ENCODE measurements at regions of chr15 and their contacts with region 1.

Region 1: DNA sequence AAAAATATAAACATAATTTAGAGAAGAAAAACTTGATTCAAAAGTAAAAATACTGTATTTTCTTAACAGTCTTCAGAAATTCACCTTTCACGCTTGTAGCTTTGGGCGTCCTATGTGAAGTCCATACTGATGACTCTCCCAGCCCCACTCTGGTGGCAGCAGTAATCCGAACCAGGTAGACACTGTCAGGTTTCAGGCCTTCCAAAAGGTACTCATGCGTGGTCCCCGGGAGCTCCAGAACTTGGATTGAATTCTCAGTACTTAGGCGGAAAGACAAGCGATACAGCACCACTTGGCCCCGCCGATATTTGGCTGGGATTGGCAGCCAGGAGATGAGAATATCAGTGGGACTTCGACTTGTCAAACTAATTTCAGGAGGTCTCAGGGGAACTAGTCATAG is 69.7 kb downstream of the PRTG start:
- DNase-seq: no peak
- ATAC-seq: no peak
- H3K4me3 ChIP-seq: no peak overlapping the region
- H3K27ac ChIP-seq: no peak overlapping the region
- H3K4me1 ChIP-seq: no peaks in the 10 kb centered on the region
- H3K27me3 ChIP-seq: no peaks in the 10 kb centered on the region
- CTCF ChIP-seq: no peak

Region 2: DNA sequence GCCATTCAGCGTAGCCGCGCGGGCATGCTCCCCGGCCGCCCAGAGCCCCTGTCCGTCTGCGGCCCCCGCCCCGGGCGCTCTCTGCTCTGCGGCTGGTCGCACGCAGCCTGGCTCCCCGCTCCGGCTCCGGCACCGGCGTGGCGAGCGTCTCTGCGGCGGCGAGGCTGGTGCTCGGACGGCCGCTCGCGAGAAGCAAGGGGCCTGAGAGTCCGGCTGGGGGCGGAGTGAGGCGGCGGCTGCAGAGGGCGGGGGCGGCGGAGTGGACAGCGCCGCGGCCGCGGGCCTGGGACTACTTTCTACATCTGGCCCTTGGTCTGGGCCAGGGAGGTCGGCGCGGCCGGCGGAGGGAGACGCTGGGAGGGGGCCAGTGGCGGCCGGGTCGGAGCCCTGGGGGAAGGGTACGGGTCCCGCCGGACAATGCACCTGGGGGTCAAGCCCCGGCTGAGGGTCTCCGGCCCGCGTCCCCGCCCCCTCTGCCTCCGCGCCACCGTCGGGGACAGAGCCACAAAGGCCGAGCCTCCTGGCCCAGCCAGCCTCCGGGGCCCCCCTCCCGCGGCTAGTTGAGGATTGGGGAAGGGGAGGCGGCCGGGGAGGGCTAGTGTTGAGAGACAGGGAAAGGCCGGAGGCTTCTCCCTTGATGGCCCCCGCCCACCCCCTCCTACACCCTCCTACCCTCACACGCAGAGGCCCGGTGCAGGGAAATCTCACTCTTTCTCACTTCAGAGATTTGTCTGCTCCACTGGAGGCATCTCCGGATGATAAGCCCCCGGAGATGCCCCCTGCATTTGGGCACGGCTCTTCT is 69.8 kb after region 1 on chr15 and contains the start of gene PRTG:
- intact Hi-C with region 1: loop called in 1 of 10 experiments (anchors 10 kb)
- DNase-seq: peak; percentile 77 to 80
- ATAC-seq: peak; percentile 95 to 97 (median 96)
- H3K4me3 ChIP-seq: peak within 1 kb of the TSS; percentile 63 to 91 (median 78)
- H3K27ac ChIP-seq: peak within 1 kb of the TSS in 9 of 10 donors; percentile 58 to 87 (median 77)
- H3K4me1 ChIP-seq: peaks cover 0 to 33% (median 14%) of the 10 kb centered on the region in 9 donors
- H3K27me3 ChIP-seq: peaks cover 0 to 72% (median 10%) of the 10 kb centered on the region in 7 donors
- CTCF ChIP-seq: no peak
- total RNA-seq, gene PRTG: 0.46 to 1.9 (median 1.1) TPM

Region 3: DNA sequence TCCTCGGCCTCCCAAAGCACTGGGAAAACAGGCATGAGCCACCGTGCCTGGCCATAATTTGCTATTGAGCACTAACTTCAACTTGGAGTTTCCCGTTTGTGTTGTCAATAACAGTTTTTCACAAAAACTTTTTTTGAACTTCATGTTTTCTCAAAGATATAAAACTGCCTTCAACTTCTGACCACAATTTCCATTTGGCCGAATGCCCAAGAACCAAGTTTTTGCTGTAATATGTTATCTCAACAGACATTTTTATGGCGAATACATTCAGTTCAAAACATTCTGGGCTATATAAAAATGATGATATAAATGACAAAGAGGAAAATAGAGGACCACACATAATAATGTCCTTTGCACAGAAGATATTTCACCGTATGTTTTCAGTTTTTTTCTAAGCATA is 263.8 kb after region 1 on chr15:
- intact Hi-C with region 1: no loop called
- DNase-seq: no peak
- ATAC-seq: no peak
- H3K4me3 ChIP-seq: no peak overlapping the region
- H3K27ac ChIP-seq: no peak overlapping the region
- H3K4me1 ChIP-seq: peaks cover 0 to 7% (median 0%) of the 10 kb centered on the region in 9 donors
- H3K27me3 ChIP-seq: no peaks in the 10 kb centered on the region
- CTCF ChIP-seq: no peak

Measured in heart right ventricle (tissue), 16 donors.